T-cell (primary cell): ENCODE measurements at regions of chr20 and their contacts with region 1.

Region 1: GRCh38 chr20:47379433-47380150 is 23.1 kb upstream of the ZMYND8 start:
- DNase-seq: no peak
- ATAC-seq: no peak
- H3K4me3 ChIP-seq: no peak overlapping the region
- H3K4me3 Mint-ChIP-seq: no peak overlapping the region
- H3K27ac ChIP-seq: no peak overlapping the region
- H3K27ac Mint-ChIP-seq: no peak overlapping the region
- H3K4me1 ChIP-seq: peaks cover 0 to 9% of the 10 kb centered on the region in 2 experiments
- H3K4me1 Mint-ChIP-seq: peaks cover 6 to 13% (median 8%) of the 10 kb centered on the region in 3 donors
- H3K27me3 ChIP-seq: no peaks in the 10 kb centered on the region
- H3K27me3 Mint-ChIP-seq: no peaks in the 10 kb centered on the region

Region 2: GRCh38 chr20:47196091-47197081 is 183.2 kb before region 1 on chr20:
- CTCF ChIA-PET with region 1: interaction called in 1 of 2 experiments, 17 read pairs
- POLR2A ChIA-PET with region 1: no interaction called
- DNase-seq: peak; percentile 22 to 80 (median 60)
- ATAC-seq: peak; percentile 58 to 75 (median 69)
- H3K4me3 ChIP-seq: no peak overlapping the region
- H3K4me3 Mint-ChIP-seq: peak overlapping the region in 1 of 3 donors; percentile 13
- H3K27ac ChIP-seq: no peak overlapping the region
- H3K27ac Mint-ChIP-seq: no peak overlapping the region
- H3K4me1 ChIP-seq: peaks cover 0 to 5% of the 10 kb centered on the region in 2 experiments
- H3K4me1 Mint-ChIP-seq: peaks cover 5 to 7% (median 7%) of the 10 kb centered on the region in 3 donors
- H3K27me3 ChIP-seq: peaks cover 0 to 18% of the 10 kb centered on the region in 2 experiments
- H3K27me3 Mint-ChIP-seq: peaks cover 3 to 8% of the 10 kb centered on the region in 2 donors

Region 3: DNA sequence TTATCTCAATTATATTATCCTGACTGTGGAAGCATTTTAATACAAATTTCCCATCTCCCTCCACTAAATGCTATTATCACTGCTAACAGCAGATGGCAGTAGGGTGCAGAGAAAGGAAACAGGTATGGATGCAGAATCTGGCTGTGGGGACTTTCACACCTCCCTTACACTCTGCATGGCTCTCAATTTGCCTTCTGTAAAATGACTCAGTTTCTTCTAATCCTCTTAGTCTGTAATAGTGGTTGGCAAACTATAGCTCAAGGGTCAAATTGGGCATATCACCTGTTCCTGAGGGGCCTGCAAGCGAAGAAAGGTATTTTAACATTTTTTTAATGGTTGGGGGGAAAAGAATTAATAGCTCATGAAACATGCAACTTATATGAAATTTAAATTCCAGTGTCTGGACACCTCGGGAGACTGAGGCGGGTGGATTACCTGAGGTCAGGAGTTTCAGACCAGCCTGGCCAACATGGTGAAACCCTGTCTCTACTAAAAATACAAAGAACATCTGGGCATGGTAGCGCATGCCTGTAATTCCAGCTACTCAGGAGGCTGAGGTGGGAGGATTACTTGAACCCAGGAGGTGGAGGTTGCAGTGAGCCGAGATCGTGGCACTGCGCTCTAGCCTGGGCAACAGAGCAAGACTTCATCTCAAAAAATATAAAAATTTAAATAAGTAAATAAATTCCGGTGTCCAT is 106.5 kb before region 1 on chr20:
- CTCF ChIA-PET with region 1: interaction called, 130 to 209 read pairs
- POLR2A ChIA-PET with region 1: interaction called, 3 to 4 read pairs
- DNase-seq: peak in 28 of 35 experiments; percentile 2 to 81 (median 24)
- ATAC-seq: peak; percentile 62 to 75 (median 70)
- H3K4me3 ChIP-seq: no peak overlapping the region
- H3K4me3 Mint-ChIP-seq: no peak overlapping the region
- H3K27ac ChIP-seq: no peak overlapping the region
- H3K27ac Mint-ChIP-seq: peak overlapping the region; percentile 76 to 84
- H3K4me1 ChIP-seq: no peaks in the 10 kb centered on the region
- H3K4me1 Mint-ChIP-seq: peaks cover 0 to 42% (median 26%) of the 10 kb centered on the region in 3 donors
- H3K27me3 ChIP-seq: no peaks in the 10 kb centered on the region
- H3K27me3 Mint-ChIP-seq: no peaks in the 10 kb centered on the region

Region 4: GRCh38 chr20:47318586-47319516 is 60.7 kb before region 1 on chr20:
- CTCF ChIA-PET with region 1: interaction called, 4 to 12 read pairs
- POLR2A ChIA-PET with region 1: no interaction called
- DNase-seq: peak in 2 of 35 experiments; percentile 0 to 8
- ATAC-seq: peak in 1 of 4 experiments; percentile 12
- H3K4me3 ChIP-seq: no peak overlapping the region
- H3K4me3 Mint-ChIP-seq: peak overlapping the region; percentile 21 to 64 (median 28)
- H3K27ac ChIP-seq: no peak overlapping the region
- H3K27ac Mint-ChIP-seq: peak overlapping the region; percentile 83 to 90
- H3K4me1 ChIP-seq: peaks cover 2 to 45% of the 10 kb centered on the region in 2 experiments
- H3K4me1 Mint-ChIP-seq: peaks cover 70 to 90% (median 86%) of the 10 kb centered on the region in 3 donors
- H3K27me3 ChIP-seq: no peaks in the 10 kb centered on the region
- H3K27me3 Mint-ChIP-seq: no peaks in the 10 kb centered on the region

Region 5: DNA sequence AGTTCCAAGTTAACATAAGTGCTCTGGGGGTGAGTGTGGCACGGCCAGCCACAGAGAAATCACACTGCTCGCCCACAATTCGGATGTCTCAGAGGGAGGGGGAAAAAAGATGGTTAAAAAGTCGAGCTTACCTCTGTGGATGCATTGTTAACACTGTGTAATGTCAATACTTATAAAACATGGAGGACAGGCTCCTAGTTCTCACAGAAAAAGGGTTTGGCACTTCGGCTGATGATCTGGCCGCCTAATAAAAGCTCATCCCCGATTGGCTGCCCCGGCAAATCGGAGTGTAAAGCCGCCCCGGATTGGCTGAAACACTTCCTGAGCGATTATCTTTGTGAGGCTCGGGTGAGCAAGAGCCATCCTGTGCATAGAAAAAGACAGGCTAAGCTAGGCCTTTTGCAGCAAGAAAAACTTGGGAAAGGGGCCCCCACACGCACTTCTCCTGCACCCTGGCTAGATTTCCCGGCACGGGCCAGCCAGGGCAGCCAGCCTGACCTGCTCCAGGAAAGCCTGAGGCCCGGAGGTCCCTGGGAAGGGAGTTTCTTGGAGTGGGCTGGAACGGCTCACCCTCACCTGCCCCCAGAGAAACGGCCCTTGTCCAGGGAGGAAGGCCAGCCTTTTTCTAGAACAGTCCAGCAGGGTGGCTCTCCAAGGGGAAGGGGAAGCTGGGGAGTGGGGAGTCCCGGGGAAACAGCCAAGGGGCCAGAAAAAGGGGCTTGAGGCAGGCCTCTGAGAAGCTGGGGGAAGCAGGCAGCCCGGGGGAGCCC is 22.9 kb before region 1 on chr20 and contains the start of gene ZMYND8:
- CTCF ChIA-PET with region 1: interaction called, 5 to 25 read pairs
- POLR2A ChIA-PET with region 1: interaction called in 1 of 2 experiments, 3 read pairs
- DNase-seq: peak; percentile 79 to 100 (median 93)
- ATAC-seq: peak; percentile 85 to 90 (median 86)
- H3K4me3 ChIP-seq: peak within 1 kb of the TSS; percentile 50 to 71
- H3K4me3 Mint-ChIP-seq: peak within 1 kb of the TSS in 2 of 3 donors; percentile 87 to 88
- H3K27ac ChIP-seq: peak within 1 kb of the TSS; percentile 92
- H3K27ac Mint-ChIP-seq: peak within 1 kb of the TSS in 1 of 2 donors; percentile 99
- H3K4me1 ChIP-seq: peaks cover 56 to 77% of the 10 kb centered on the region in 2 experiments
- H3K4me1 Mint-ChIP-seq: peaks cover 39 to 61% (median 50%) of the 10 kb centered on the region in 3 donors
- H3K27me3 ChIP-seq: no peaks in the 10 kb centered on the region
- H3K27me3 Mint-ChIP-seq: no peaks in the 10 kb centered on the region
- total RNA-seq, gene ZMYND8: 39.6 to 68.9 (median 43.6) TPM

Region 6: GRCh38 chr20:47438577-47439381 is 59.2 kb after region 1 on chr20:
- CTCF ChIA-PET with region 1: no interaction called
- POLR2A ChIA-PET with region 1: interaction called in 1 of 2 experiments, 11 read pairs
- DNase-seq: peak in 3 of 35 experiments; percentile 7 to 17 (median 10)
- ATAC-seq: peak in 1 of 4 experiments; percentile 44
- H3K4me3 ChIP-seq: no peak overlapping the region
- H3K4me3 Mint-ChIP-seq: no peak overlapping the region
- H3K27ac ChIP-seq: no peak overlapping the region
- H3K27ac Mint-ChIP-seq: no peak overlapping the region
- H3K4me1 ChIP-seq: peaks cover 2 to 4% of the 10 kb centered on the region in 2 experiments
- H3K4me1 Mint-ChIP-seq: peaks cover 6% of the 10 kb centered on the region in 3 donors
- H3K27me3 ChIP-seq: no peaks in the 10 kb centered on the region
- H3K27me3 Mint-ChIP-seq: no peaks in the 10 kb centered on the region

Region 7: GRCh38 chr20:47620808-47621805 is 241.5 kb after region 1 on chr20:
- CTCF ChIA-PET with region 1: interaction called, 6 to 20 read pairs
- POLR2A ChIA-PET with region 1: no interaction called
- DNase-seq: peak in 6 of 35 experiments; percentile 5 to 70 (median 12)
- ATAC-seq: peak in 1 of 4 experiments; percentile 51
- H3K4me3 ChIP-seq: no peak overlapping the region
- H3K4me3 Mint-ChIP-seq: no peak overlapping the region
- H3K27ac ChIP-seq: no peak overlapping the region
- H3K27ac Mint-ChIP-seq: no peak overlapping the region
- H3K4me1 ChIP-seq: no peaks in the 10 kb centered on the region
- H3K4me1 Mint-ChIP-seq: peaks cover 19 to 26% (median 22%) of the 10 kb centered on the region in 3 donors
- H3K27me3 ChIP-seq: no peaks in the 10 kb centered on the region
- H3K27me3 Mint-ChIP-seq: no peaks in the 10 kb centered on the region